ENCODE measurements at regions of chr11 and their contacts with region 1.

Region 1: GRCh38 chr11:132126973-132127899 is 756.8 kb downstream of the NTM start:
- DNase-seq: peak in 2 of 4 donors; percentile 80 to 91
- ATAC-seq: peak; percentile 77
- H3K4me3 ChIP-seq: no peak overlapping the region
- H3K27ac ChIP-seq: no peak overlapping the region
- H3K4me1 ChIP-seq: peaks cover 0 to 6% of the 10 kb centered on the region in 2 donors
- H3K27me3 ChIP-seq: peaks cover 0 to 10% of the 10 kb centered on the region in 2 donors
- CTCF ChIP-seq: peak in 1 of 2 donors; percentile 26

Region 2: DNA sequence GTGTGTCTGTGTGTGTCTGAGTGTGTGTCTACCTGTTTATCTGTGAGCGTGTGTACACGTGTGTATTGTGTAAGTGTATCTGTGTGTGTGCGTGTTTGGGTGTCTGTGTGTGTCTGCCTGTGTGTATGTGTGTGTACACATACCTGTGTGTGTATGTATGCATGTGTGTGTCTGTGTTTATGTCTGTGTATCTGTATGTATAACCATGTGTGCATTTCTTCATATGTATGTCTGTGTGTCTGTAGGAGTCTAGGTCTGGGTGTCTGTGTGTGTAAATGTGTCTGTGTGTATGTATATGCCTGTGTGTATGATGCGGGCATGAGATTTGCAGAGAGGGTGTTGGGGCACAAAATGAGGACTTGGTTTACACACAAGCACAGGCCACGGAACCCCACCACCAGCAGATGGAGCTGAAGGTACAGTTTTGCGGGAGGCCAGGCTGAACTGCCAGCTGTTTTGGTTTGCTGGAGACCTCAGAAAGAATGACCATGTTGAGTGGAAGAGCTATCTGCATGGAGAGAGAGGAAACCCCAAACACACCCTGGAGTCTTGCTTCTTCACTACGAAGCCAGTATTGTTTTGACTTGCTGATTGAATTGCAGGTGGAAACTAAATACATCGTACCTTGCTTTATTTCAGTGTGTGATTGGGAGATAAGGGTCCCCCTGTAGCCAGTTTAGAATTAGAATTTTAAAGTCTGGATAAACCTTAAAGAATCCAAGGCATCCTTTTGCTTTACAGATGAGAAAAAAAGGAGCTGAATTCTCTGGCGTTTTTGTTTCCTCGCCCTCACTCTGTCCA is 259.6 kb before region 1 on chr11:
- intact Hi-C with region 1: loop called in 1 of 2 experiments (anchors 10 kb)
- DNase-seq: peak in 3 of 4 donors; percentile 45 to 86 (median 71)
- ATAC-seq: peak; percentile 66
- H3K4me3 ChIP-seq: no peak overlapping the region
- H3K27ac ChIP-seq: no peak overlapping the region
- H3K4me1 ChIP-seq: no peaks in the 10 kb centered on the region
- H3K27me3 ChIP-seq: no peaks in the 10 kb centered on the region
- CTCF ChIP-seq: peak; percentile 30 to 44

Region 3: GRCh38 chr11:131910523-131911387 is 216.5 kb before region 1 on chr11:
- intact Hi-C with region 1: no loop called
- DNase-seq: peak in 2 of 4 donors; percentile 30 to 45
- ATAC-seq: peak; percentile 24
- H3K4me3 ChIP-seq: peak overlapping the region; percentile 17 to 21
- H3K27ac ChIP-seq: no peak overlapping the region
- H3K4me1 ChIP-seq: peaks cover 0 to 8% of the 10 kb centered on the region in 2 donors
- H3K27me3 ChIP-seq: peaks cover 0 to 66% of the 10 kb centered on the region in 2 donors
- CTCF ChIP-seq: no peak